HepG2 (cell line): ENCODE measurements at regions of chr4 and their contacts with region 1.

Region 1: DNA sequence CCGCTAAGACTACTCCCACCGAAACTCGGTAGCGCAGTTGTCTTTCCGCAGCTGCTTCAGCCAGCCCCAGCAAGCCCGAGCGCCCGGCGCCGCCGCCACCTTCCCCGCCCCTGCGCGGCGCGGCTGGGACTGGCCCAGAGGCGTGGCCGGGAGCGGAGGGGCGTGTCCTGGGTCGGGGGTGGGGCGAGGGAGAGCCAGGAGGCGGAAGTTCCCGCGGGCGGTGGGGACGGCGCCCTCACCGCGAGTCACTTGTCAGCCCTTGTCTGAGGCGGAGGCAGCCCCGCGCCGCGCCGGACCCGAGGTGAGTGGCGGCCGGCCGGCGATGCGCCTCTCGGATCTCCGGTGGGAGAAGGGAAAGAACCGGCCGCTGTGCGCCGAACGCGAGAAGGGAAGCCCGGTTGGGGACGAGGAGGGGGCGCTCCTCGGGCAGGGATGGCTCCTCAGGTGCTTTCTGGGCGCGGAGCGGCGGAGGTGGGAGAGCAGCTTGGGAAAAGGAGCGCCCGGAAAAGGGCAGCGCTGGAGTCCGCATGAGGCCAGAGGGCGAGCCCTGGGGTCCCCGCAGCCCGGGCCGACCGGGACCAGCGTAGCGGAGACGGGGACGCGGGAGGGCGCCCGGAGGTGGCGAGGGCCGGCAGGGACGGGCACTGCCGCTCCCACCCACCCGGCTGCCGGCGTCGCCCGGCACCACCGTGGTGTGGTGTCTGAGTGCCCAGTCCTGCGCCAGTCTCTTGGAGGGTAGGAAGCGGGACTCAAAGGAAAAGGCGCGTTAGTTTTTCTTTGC is at the start of gene PDLIM5:
- DNase-seq: peak; percentile 80
- ATAC-seq: peak; percentile 89
- H3K4me3 ChIP-seq: peak within 1 kb of the TSS; percentile 90 to 96 (median 93)
- H3K27ac ChIP-seq: peak within 1 kb of the TSS; percentile 91
- H3K4me1 ChIP-seq: peaks cover 63% of the 10 kb centered on the region
- H3K27me3 ChIP-seq: no peaks in the 10 kb centered on the region; a peak in 1 of 5 replicates
- CTCF ChIP-seq: peak; percentile 38; the same call in 1 of the 2 replicates
- EP300 ChIP-seq: no peak
- POLR2A ChIP-seq: peak; percentile 79 to 94
- RAD21 ChIP-seq: no peak; the same call in none of the 2 replicates
- total RNA-seq, gene PDLIM5: 52.8 and 70.2 TPM in 2 replicates

Region 2: DNA sequence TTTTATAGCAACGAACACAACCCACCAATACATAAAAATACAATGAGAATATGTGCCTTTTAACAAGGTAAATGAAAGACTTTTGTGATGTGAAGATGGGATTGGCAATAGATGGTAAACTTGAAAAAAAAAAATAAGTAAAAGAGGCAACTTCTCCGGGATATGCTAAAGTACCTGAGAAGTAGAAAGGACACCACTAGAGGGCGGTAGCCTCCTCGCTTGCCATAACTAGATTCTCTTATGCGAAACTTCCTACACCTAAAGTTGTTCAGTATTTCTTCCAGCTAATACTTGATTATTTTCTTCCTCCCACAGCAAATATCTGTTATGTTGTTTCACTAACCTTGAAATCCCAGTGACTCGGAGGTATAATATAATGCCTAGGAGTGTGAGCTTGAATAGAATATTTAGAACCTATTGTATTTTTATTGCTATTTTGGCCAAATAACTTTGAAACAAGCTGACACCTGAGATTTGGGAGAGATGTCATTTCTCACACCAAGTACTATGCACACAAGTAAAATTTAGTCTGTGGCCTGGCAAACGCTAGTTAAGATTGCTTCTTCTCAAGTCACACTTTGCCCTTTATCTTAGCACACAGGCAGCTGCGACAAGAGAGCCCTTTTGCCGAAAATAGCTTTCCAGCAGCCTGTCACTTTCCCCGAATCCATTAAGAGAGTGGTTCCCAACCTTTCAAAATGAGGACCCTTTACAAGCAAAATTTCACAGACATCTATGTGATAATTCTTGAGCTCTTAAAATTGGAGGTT is 45.0 kb before region 1 on chr4:
- CTCF ChIA-PET with region 1: no interaction called
- POLR2A ChIA-PET with region 1: interaction called, 94 read pairs
- in situ Hi-C with region 1: loop called (anchors 5 kb)
- intact Hi-C with region 1: loop called (anchors 2 kb)
- DNase-seq: peak; percentile 73
- ATAC-seq: peak; percentile 68
- H3K4me3 ChIP-seq: no peak overlapping the region
- H3K27ac ChIP-seq: no peak overlapping the region
- H3K4me1 ChIP-seq: peaks cover 30% of the 10 kb centered on the region
- H3K27me3 ChIP-seq: no peaks in the 10 kb centered on the region
- CTCF ChIP-seq: peak; percentile 83
- EP300 ChIP-seq: no peak
- POLR2A ChIP-seq: no peak
- RAD21 ChIP-seq: peak; percentile 75

Region 3: GRCh38 chr4:94428884-94429557 is 22.9 kb before region 1 on chr4:
- CTCF ChIA-PET with region 1: no interaction called
- POLR2A ChIA-PET with region 1: interaction called, 34 read pairs
- in situ Hi-C with region 1: no loop called
- intact Hi-C with region 1: loop called (anchors 2 kb)
- DNase-seq: peak; percentile 96
- ATAC-seq: peak; percentile 98
- H3K4me3 ChIP-seq: no peak overlapping the region
- H3K27ac ChIP-seq: peak overlapping the region; percentile 68
- H3K4me1 ChIP-seq: peaks cover 48% of the 10 kb centered on the region
- H3K27me3 ChIP-seq: no peaks in the 10 kb centered on the region
- CTCF ChIP-seq: no peak
- EP300 ChIP-seq: peak in 1 of 2 experiments; percentile 86; a peak in 3 of 4 replicates
- POLR2A ChIP-seq: no peak
- RAD21 ChIP-seq: peak; percentile 26; the same call in 1 of the 2 replicates

Region 4: DNA sequence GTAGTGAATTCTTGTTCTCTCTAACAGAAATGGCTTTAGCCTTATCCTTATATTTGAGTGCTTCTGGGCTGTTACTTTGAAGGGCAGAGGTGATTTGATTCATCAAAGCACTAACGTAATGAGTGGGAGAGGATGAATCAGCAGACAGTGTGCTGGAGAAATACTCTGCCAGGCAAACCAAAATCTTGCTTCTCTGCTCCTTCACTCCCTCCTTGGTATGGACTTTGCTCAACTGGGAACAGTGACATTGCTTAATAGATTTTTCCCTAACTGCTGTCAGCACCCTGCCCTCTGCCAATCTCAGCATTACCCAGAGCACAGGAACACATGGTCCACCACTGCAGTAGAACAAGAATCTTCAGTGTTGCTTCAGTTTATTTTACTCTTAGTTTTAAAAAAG is 55.8 kb after region 1 on chr4:
- CTCF ChIA-PET with region 1: no interaction called
- POLR2A ChIA-PET with region 1: no interaction called
- in situ Hi-C with region 1: no loop called
- intact Hi-C with region 1: loop called (anchors 5 kb)
- DNase-seq: peak; percentile 23
- ATAC-seq: peak; percentile 81
- H3K4me3 ChIP-seq: no peak overlapping the region
- H3K27ac ChIP-seq: peak overlapping the region; percentile 9
- H3K4me1 ChIP-seq: peaks cover 38% of the 10 kb centered on the region
- H3K27me3 ChIP-seq: no peaks in the 10 kb centered on the region
- CTCF ChIP-seq: no peak
- EP300 ChIP-seq: no peak
- POLR2A ChIP-seq: no peak
- RAD21 ChIP-seq: no peak

Region 5: GRCh38 chr4:94561249-94562024 is 109.6 kb after region 1 on chr4:
- CTCF ChIA-PET with region 1: no interaction called
- POLR2A ChIA-PET with region 1: interaction called, 7 read pairs
- in situ Hi-C with region 1: no loop called
- intact Hi-C with region 1: loop called (anchors 5 kb)
- DNase-seq: no peak
- ATAC-seq: no peak
- H3K4me3 ChIP-seq: no peak overlapping the region
- H3K27ac ChIP-seq: peak overlapping the region; percentile 19
- H3K4me1 ChIP-seq: peaks cover 67% of the 10 kb centered on the region
- H3K27me3 ChIP-seq: no peaks in the 10 kb centered on the region
- CTCF ChIP-seq: no peak
- EP300 ChIP-seq: no peak
- POLR2A ChIP-seq: no peak
- RAD21 ChIP-seq: no peak